ENCODE measurements at regions of chr10 and their contacts with region 1.

Region 1: GRCh38 chr10:91567815-91568214 is 65.1 kb downstream of the PPP1R3C start:
- DNase-seq: no peak
- H3K4me3 ChIP-seq: no peak overlapping the region
- H3K27ac ChIP-seq: no peak overlapping the region
- H3K4me1 ChIP-seq: peaks cover 4 to 38% (median 35%) of the 10 kb centered on the region in 4 donors
- H3K27me3 ChIP-seq: no peaks in the 10 kb centered on the region
- CTCF ChIP-seq: no peak
- EP300 ChIP-seq: no peak
- POLR2A ChIP-seq: no peak

Region 2: DNA sequence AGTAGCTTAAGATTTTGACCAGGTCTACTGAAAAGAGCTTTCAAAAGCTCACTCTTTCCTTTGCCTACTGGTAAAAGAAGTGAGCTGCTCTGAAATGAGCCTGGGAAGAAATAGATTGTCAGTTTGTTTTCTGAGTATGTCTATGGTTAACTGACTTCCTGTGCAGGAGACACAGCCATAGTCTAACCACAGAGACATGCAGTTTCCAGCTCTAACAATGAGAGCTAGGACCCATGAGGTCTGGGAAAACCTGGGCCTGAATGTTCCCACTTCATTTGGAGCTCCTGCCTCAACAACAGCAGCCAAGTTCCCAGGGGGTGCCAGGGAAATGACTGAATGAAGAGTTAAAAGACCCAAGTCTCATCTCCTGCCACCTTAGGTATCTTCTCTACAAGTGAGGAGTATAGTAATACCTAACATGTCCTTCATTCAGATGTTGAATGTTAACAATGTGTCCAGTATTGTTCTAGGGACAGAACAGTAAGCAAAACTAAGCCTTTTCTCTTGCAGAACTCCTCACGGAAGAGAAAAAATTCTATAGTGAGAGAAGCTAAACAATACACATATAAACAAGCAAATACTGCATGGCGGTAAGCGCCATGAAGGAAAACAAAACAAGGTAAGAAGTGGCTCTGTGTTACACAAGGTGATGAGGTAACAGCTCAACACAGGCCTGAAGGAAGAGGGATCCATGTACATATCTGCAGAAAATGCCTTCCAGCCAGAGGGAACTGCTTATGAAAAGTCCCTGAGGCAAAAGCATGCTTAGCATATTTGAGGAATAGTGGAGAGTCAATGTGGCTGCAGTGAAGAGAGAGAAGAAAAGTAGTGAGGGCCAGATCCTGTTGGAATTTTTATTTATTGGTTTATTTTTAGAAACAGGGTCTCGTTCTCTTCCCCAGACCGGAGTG is 620.5 kb before region 1 on chr10:
- intact Hi-C with region 1: no loop called
- DNase-seq: peak; percentile 47
- H3K4me3 ChIP-seq: no peak overlapping the region
- H3K27ac ChIP-seq: no peak overlapping the region
- H3K4me1 ChIP-seq: no peaks in the 10 kb centered on the region
- H3K27me3 ChIP-seq: no peaks in the 10 kb centered on the region
- CTCF ChIP-seq: no peak
- EP300 ChIP-seq: no peak
- POLR2A ChIP-seq: no peak

Region 3: DNA sequence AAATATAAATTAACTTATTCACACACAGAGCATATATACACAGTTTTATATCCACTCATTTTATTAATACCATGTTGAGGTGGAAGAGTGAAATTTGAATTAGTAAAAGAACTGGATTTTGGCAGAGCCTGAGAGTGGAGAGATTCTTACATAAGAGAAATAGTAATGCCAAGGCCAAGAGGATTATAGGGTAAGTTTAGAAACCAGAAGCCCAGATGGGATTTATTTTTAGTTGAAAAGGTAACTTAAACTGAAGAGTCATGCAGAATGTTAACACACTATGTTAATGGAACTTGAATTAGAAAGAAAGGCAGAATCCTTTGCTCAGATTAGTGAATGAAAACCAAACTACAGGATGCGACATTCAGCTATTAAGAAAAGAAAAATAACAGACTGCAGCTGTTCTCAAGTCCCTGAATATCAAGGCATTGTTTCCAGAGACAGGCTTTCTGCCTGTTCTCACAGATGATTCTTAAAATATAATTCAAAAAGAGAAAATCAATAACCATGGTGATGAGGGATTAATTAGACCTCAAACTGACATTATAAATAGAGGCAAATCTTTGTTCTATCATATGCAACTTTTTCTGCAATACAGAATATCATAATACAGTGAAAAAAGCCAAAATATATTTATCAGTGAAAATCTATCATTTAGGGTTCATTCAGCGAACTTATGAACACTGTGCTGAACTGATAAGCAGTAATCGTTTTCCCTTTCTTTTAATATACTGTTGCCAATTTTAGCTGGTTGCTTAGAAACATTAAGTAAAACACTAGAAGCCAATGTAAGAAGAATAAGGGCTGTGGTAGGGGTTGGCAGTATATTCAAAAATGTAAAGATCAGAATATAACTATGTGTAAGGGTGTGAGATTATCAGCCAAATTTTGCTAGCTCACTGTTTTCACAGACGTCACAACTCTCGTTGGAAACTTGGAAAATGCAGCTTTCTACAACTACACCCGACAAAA is 123.3 kb before region 1 on chr10:
- intact Hi-C with region 1: no loop called
- DNase-seq: no peak
- H3K4me3 ChIP-seq: no peak overlapping the region
- H3K27ac ChIP-seq: peak overlapping the region in 1 of 4 donors; percentile 1
- H3K4me1 ChIP-seq: peaks cover 14 to 25% (median 18%) of the 10 kb centered on the region in 4 donors
- H3K27me3 ChIP-seq: no peaks in the 10 kb centered on the region
- CTCF ChIP-seq: no peak
- EP300 ChIP-seq: no peak
- POLR2A ChIP-seq: no peak

Region 4: DNA sequence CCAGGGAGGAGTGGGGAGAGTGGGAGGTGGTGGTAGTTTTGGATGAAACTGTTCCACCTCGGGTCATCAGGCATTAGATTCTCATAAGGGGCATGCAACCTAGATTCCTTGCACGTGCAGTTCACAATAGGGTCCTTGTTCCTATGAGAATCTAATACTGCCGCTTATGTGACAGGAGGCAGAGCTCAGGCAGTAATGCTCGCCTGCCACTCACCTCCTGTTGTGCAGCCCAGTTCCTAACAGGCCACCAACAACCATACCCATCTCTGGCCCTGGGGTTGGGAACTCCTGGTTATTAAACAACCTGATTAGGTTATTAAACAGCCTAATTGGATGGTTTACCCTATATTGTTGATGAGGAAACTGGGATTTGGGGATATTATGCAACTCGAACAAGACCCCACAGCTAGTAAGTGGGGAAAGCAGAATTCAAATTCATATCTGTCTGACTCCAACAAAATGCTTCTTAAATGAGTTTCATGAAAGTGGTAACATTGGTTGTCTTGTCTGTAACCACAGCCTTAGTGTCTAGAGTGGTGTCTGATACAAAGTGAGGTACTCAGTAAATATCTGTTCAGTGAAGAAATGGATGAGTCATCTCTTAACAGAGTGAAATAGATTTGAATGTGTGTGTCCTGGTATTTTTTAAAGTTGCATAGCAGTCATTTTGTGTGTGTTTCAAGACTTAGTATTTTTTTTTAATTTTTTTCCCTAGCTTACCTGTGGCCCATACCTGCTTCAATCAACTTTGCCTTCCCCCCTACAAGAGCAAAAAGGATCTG is 56.1 kb before region 1 on chr10:
- intact Hi-C with region 1: no loop called
- DNase-seq: no peak
- H3K4me3 ChIP-seq: no peak overlapping the region
- H3K27ac ChIP-seq: peak overlapping the region in 3 of 4 donors; percentile 17 to 28 (median 26)
- H3K4me1 ChIP-seq: peaks cover 0 to 26% (median 13%) of the 10 kb centered on the region in 4 donors
- H3K27me3 ChIP-seq: no peaks in the 10 kb centered on the region
- CTCF ChIP-seq: no peak
- EP300 ChIP-seq: no peak
- POLR2A ChIP-seq: no peak

Region 5: DNA sequence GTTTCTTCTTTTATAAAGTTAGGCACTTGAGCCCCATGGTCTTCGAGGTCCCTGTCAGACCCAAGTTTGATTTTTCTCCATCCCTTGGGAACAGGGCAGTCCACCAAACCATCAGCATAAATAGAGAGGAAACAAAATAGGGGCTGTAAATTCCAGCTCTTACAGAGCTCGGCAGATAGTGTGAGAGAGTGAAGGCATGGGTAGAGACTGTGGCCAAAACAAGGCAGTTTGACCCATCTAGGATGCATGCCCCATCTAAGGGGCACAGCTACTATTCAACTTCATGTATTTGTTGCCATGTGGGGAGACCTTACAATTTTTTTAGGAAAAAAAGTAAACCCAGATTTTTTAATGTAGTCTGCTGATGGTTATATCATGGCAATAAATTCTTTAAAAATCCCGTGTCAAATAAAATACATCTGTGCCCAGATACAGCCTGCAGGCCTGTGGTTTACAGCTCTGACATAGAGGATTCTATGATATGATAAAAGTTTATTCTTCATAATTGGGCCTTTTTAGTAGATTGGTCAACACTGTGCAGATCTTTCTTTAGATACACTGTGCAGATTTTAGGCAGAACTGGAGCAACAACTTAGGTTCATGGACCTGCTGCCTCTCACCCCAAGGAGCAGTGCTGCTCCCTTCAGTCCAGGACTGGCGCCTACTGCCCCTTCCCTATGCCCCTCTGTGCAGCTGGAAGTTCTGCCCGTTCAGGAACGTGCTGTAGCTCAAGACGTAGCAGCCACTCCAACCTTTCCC is 59.7 kb after region 1 on chr10:
- intact Hi-C with region 1: loop called (anchors 5 kb)
- DNase-seq: no peak
- H3K4me3 ChIP-seq: peak overlapping the region; percentile 7 to 78 (median 66)
- H3K27ac ChIP-seq: peak overlapping the region; percentile 26 to 82 (median 48)
- H3K4me1 ChIP-seq: peaks cover 4 to 27% (median 21%) of the 10 kb centered on the region in 4 donors
- H3K27me3 ChIP-seq: no peaks in the 10 kb centered on the region
- CTCF ChIP-seq: no peak
- EP300 ChIP-seq: no peak
- POLR2A ChIP-seq: no peak

Measured in esophagus muscularis mucosa (tissue), 4 donors.